ENCODE measurements at regions of chr10 and their contacts with region 1.

Region 1: GRCh38 chr10:124461438-124462347 is at the start of gene LHPP:
- DNase-seq: peak; percentile 86
- H3K4me3 Mint-ChIP-seq: peak within 1 kb of the TSS; percentile 87
- H3K27ac Mint-ChIP-seq: peak within 1 kb of the TSS; percentile 98
- H3K4me1 Mint-ChIP-seq: peaks cover 26% of the 10 kb centered on the region
- H3K27me3 Mint-ChIP-seq: peaks cover 14% of the 10 kb centered on the region
- total RNA-seq, gene LHPP: 4.6 and 5.0 TPM in 2 replicates

Region 2: DNA sequence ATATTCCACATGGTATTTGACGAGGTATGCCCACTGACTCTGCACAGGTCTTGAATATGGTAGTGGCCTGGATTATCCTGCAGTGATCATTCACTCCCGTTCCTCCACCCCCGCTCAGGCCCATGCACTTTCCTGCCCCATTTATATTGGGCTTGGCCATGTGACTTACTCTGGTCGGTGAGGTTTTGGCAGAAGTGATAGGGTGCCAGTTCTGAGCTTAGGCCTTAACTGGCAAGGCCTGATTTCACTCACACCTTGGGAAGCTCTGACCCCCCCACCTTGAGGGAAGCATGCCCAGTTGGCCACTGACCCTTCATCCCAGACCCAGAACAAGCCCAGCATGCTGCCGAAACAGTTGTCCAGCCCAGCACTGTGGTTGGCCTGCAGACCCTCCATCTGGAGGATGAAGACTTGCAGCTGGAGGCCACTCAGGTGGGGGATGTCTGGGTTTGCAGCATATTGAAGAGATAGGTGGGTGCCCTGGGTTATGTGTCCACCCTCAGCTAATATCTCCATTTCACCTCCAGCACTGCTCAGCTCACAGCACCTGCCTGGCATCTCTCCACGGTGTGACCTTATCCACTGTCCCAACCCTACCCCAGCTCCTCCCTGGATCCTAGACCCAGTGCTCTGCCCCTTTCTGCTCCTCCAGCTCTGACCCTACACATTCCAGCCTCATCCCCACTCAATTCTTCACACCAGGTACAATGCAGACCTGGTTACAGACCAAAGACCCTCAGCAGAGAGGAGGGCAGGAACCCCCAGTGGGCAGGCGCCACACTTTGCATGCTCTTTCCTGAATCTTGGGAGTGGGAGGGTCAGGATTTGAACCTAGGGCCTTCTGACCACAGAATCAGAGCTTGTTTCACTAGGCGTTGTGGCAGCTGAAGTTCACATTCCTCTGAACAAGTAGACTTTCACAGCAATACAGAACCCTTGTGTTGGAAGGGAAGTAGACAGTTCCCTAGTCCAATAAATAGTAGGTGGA is 230.2 kb before region 1 on chr10:
- intact Hi-C with region 1: loop called (anchors 5 kb)
- DNase-seq: peak; percentile 52
- H3K4me3 Mint-ChIP-seq: no peak overlapping the region
- H3K27ac Mint-ChIP-seq: peak overlapping the region; percentile 62
- H3K4me1 Mint-ChIP-seq: no peaks in the 10 kb centered on the region
- H3K27me3 Mint-ChIP-seq: no peaks in the 10 kb centered on the region

Region 3: DNA sequence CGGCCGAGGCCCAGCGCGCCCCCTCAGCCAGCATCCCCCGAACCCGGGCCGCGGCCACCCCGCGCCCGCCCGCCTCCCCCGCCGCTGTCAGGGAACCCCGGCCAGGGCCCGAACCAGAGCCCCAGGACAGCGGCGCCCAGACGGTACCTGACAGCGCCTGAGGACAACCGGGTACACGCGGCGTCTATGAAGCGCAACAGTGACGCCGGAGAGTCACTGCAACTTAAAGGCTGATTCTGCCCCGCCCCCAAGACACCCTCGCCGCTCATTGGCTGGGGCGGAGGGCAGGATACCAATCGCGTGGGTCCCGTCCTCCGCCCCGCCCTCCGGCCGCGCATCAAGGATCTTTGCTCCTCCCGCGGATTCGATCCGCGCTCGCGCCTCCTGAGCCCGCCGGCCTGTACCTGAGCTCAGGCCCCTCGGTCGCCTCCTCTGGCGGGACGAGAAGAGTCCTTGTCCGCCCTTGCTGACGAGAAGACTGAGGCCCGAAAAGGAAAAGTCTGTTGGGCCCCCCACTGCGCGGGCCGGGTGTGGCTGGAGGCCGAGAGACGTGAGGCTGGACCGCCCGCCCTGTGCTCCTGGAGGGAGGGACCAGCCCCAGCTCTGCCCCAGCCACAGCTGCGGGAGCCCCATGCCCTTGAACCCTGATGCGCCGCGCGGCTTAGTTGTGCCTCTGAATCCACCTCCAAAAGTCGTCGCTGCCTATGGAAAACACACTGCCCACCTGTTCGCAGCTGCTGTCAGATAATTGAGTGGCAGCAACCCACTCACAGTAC is 42.8 kb before region 1 on chr10 and contains the start of gene OAT:
- intact Hi-C with region 1: loop called (anchors 1 kb)
- DNase-seq: peak; percentile 95
- H3K4me3 Mint-ChIP-seq: peak within 1 kb of the TSS; percentile 81
- H3K27ac Mint-ChIP-seq: peak within 1 kb of the TSS; percentile 29
- H3K4me1 Mint-ChIP-seq: peaks cover 12% of the 10 kb centered on the region
- H3K27me3 Mint-ChIP-seq: peaks cover 22% of the 10 kb centered on the region
- total RNA-seq, gene OAT: 35.6 and 37.9 TPM in 2 replicates

Measured in activated T-helper 1 cell treated with anti-CD3 and anti-CD28 coated beads, Interleukin-12 subunit alpha, Interleukin-12 subunit beta, Interleukin-2, Interleukin-4 antibody, amounts not matched to agents 30 ng/mL and 10 ng/mL and 1 ng/mL, durations not matched to agents 14 hours and 24 hours and 36 hours (primary cell).